SK-N-SH (cell line): ENCODE measurements at regions of chr9 and their contacts with region 1.

Region 1: DNA sequence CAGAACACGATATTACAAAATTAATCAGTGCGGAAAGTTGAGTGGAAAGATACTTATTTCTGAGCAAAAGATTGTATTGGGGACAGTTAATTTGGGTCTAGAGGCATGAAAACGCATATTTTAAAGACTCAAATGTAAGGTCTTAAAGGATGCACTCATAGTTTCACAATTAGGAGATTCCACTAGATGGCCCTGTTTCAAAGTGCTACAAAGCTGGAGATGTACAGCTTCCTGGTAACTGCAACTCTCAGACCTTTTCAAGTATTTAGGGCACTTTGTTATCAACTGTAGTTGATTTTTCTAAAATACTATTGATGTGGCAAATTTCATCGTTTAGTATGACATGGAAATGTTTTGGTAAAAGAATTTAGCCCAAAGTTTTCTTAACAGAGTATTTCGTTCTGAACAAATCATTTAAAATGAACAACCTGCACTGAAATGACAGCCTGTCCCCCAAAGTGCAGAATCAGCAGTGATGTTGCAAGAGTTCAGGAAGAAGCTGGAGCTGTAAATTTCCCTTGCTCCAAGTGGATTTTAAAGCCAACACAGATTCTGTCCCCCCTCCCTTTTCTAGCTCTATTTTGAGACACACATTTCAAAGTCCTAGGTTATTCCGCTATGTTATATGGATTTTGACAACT is 16.2 kb upstream of the NDUFB6 start:
- DNase-seq: peak; percentile 58
- H3K4me3 ChIP-seq: no peak overlapping the region
- H3K27ac ChIP-seq: no peak overlapping the region
- H3K4me1 ChIP-seq: peaks cover 0 to 3% of the 10 kb centered on the region in 2 experiments; a peak in 1 of 4 replicates
- H3K27me3 ChIP-seq: no peaks in the 10 kb centered on the region
- CTCF ChIP-seq: peak; percentile 65
- EP300 ChIP-seq: no peak
- RAD21 ChIP-seq: peak; percentile 83

Region 2: DNA sequence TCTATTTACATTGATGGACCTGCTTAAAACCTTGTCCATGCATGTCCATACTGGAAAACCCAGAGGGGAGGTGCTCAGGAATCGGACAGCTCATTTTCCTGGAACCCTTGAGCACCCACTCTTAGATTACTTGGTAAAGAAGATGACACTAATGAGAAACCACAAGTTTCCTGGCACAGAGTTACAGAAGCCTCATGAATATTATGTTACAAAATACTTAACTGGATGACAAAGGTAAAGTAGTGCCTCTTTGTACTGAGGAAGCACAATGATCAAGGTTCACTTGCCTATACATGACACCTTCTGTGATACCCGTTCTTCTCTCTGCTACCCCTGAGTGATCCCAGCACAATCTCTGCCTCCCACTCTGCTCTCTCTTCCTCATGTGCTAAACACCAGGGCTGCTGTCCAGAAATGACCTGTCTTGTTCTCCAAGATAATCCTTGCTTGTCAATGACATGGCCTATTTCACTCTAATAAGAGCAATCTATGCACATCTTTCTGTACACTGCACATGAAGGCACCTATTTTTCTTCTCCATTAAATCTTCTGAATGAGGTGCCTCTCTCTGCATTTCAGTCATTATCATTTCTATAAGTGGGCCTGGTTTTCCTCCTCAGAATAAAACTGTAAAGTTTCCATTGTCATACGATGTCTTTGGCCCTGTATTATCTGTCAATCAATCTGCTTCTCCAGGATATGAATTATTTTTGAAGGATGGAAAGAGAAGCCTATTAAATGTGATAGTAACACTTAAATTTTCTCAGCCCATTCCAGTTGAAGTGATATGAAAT is 888.8 kb before region 1 on chr9:
- CTCF ChIA-PET with region 1: no interaction called
- POLR2A ChIA-PET with region 1: no interaction called
- DNase-seq: no peak
- H3K4me3 ChIP-seq: no peak overlapping the region
- H3K27ac ChIP-seq: no peak overlapping the region
- H3K4me1 ChIP-seq: no peaks in the 10 kb centered on the region; a peak in 1 of 4 replicates
- H3K27me3 ChIP-seq: no peaks in the 10 kb centered on the region
- CTCF ChIP-seq: no peak
- EP300 ChIP-seq: no peak
- RAD21 ChIP-seq: no peak

Region 3: DNA sequence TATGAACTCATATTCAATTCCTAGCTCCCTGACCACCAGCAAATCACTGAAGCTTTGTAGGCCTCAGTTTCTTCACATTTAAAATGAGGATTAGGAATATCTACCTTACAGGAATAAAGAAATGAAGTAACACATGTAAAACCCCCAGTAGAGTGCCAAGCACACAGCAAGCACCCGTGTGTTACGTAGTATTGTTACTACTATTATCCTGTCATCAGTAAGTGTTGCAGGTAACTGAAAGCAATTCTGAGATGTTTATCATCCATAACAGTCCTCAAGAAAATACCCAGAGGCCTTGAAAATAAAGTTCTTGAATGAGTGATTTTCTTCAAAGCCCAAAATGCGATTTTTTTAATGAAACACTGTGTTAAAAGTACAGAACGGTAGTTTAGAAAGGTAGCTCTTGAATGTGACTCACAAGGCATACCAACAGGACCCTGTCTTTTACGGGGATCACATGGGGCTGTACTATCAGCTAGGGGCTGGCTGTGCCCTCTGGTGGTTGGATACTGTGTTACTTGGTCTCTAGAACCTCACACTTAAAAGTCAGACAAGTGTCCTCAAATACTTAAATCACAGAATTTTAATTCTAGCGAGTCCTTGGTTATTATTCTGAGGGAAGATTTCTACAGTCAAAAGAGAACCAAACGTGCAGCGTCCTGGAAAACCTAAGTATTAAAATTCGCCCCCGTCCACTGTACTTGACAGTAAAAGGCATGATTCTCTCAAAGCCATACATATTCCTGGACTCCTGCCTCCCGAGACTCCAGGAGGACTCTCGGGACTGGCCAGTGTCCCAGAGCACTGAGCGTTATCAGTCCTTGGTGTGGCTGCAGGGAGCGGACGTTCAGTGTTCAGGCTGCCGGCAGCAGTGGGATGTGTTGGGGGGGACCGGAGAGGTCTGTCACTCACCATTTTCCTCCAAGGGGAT is 17.0 kb before region 1 on chr9:
- CTCF ChIA-PET with region 1: interaction called, 11 read pairs
- POLR2A ChIA-PET with region 1: no interaction called
- DNase-seq: peak; percentile 79
- H3K4me3 ChIP-seq: peak overlapping the region; percentile 86 to 100
- H3K27ac ChIP-seq: peak overlapping the region; percentile 65 to 69
- H3K4me1 ChIP-seq: peaks cover 17 to 18% of the 10 kb centered on the region in 2 experiments; a peak in 3 of 4 replicates
- H3K27me3 ChIP-seq: no peaks in the 10 kb centered on the region
- CTCF ChIP-seq: peak; percentile 79
- EP300 ChIP-seq: no peak
- RAD21 ChIP-seq: peak; percentile 65

Region 4: GRCh38 chr9:32603914-32604741 is 14.9 kb after region 1 on chr9:
- CTCF ChIA-PET with region 1: interaction called, 25 read pairs
- POLR2A ChIA-PET with region 1: no interaction called
- DNase-seq: no peak
- H3K4me3 ChIP-seq: no peak overlapping the region
- H3K27ac ChIP-seq: no peak overlapping the region
- H3K4me1 ChIP-seq: no peaks in the 10 kb centered on the region
- H3K27me3 ChIP-seq: no peaks in the 10 kb centered on the region
- CTCF ChIP-seq: no peak
- EP300 ChIP-seq: no peak
- RAD21 ChIP-seq: no peak

Region 5: GRCh38 chr9:32618261-32618660 is 29.1 kb after region 1 on chr9:
- CTCF ChIA-PET with region 1: interaction called, 22 read pairs
- POLR2A ChIA-PET with region 1: no interaction called
- DNase-seq: no peak
- H3K4me3 ChIP-seq: no peak overlapping the region
- H3K27ac ChIP-seq: no peak overlapping the region
- H3K4me1 ChIP-seq: no peaks in the 10 kb centered on the region
- H3K27me3 ChIP-seq: no peaks in the 10 kb centered on the region; the same call in 1 of the 2 replicates
- CTCF ChIP-seq: no peak
- EP300 ChIP-seq: no peak
- RAD21 ChIP-seq: no peak

Region 6: GRCh38 chr9:32783169-32783891 is 194.1 kb after region 1 on chr9 and contains the start of gene TMEM215:
- CTCF ChIA-PET with region 1: interaction called, 10 read pairs
- POLR2A ChIA-PET with region 1: no interaction called
- DNase-seq: peak; percentile 88
- H3K4me3 ChIP-seq: peak within 1 kb of the TSS in 1 of 2 experiments; percentile 36; a peak in 1 of 4 replicates
- H3K27ac ChIP-seq: no peak within 1 kb of the TSS
- H3K4me1 ChIP-seq: peaks cover 0 to 3% of the 10 kb centered on the region in 2 experiments; a peak in 2 of 4 replicates
- H3K27me3 ChIP-seq: peaks cover 34% of the 10 kb centered on the region
- CTCF ChIP-seq: no peak
- EP300 ChIP-seq: no peak
- RAD21 ChIP-seq: peak; percentile 29
- polyA plus RNA-seq, gene TMEM215: not detected in 2 replicates

Region 7: GRCh38 chr9:32968101-32969011 is 379.2 kb after region 1 on chr9:
- CTCF ChIA-PET with region 1: interaction called, 195 read pairs
- POLR2A ChIA-PET with region 1: no interaction called
- DNase-seq: peak; percentile 51
- H3K4me3 ChIP-seq: no peak overlapping the region
- H3K27ac ChIP-seq: no peak overlapping the region
- H3K4me1 ChIP-seq: no peaks in the 10 kb centered on the region; a peak in 1 of 4 replicates
- H3K27me3 ChIP-seq: no peaks in the 10 kb centered on the region
- CTCF ChIP-seq: peak; percentile 94
- EP300 ChIP-seq: no peak
- RAD21 ChIP-seq: peak; percentile 87